Right ventricle myocardium inferior (tissue), 1 donor: ENCODE measurements at regions of chr6 and their contacts with region 1.

Region 1: GRCh38 chr6:117602151-117602898 is at the start of gene GOPC:
- DNase-seq: peak; percentile 98
- ATAC-seq: peak; percentile 100
- total RNA-seq, gene GOPC: 18.1 TPM

Region 2: GRCh38 chr6:117346142-117346930 is 256.0 kb before region 1 on chr6:
- intact Hi-C with region 1: loop called (anchors 2 kb)
- DNase-seq: no peak
- ATAC-seq: no peak

Region 3: GRCh38 chr6:117449549-117450439 is 152.5 kb before region 1 on chr6:
- intact Hi-C with region 1: loop called (anchors 5 kb)
- DNase-seq: no peak
- ATAC-seq: no peak

Region 4: DNA sequence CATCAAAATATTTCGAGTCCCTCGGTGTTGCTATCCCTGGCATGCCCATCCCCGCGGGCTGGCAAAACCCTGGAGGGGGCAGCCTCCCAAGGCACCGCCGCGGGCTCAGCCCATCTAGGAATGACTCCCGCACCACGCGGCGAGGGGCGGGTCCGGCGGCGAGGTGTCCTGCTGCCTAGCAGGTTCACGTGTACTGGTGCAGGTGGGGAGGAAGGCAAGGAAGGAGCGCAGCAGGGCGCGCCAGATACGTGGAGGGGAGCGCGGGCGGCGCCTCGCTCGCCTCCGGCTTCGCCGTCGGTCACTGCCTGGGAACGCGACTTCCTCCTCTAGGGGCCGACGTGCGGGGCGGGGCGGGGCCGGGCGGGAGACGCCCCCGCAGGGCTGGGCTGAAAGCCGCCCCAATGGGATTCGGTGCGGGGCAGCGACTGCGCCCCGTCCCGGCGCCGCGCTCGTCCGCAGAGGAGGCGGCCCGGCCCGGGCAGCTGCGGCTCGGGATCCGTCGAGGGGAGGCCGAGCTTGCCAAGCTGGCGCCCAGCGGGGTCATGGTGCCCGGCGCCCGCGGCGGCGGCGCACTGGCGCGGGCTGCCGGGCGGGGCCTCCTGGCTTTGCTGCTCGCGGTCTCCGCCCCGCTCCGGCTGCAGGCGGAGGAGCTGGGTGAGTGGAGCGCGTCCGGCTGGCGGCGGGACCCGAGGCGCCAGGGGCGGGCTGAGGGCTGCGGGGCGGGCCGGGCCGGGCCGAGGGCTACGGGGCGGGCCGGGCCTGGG is 119.9 kb before region 1 on chr6 and contains the start of gene DCBLD1:
- intact Hi-C with region 1: loop called (anchors 2 kb)
- DNase-seq: peak; percentile 90
- ATAC-seq: peak; percentile 94
- total RNA-seq, gene DCBLD1: 6.1 TPM

Region 5: GRCh38 chr6:117547688-117548621 is 54.4 kb before region 1 on chr6:
- intact Hi-C with region 1: loop called (anchors 5 kb)
- DNase-seq: peak; percentile 77
- ATAC-seq: peak; percentile 90

Region 6: DNA sequence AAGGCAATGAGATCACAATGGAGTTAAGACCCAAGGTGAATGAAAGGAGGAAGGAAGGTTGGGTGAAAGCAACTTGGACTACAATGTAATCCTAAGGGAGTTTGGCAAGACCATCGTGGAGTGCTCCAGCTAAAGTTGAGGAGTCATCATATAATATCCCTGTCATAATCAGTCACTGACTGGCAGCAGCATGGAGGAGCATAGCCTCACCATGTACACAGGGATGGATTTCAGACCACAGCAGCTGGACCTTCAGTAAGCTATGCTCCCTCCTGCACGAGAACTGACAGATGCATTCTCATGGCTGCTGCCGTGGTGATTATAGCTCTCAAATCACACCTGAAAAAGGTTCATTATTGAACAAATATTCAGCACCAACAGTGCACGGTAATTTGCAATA is 43.0 kb before region 1 on chr6:
- intact Hi-C with region 1: no loop called
- DNase-seq: no peak
- ATAC-seq: no peak

Region 7: GRCh38 chr6:117674991-117675657 is 72.8 kb after region 1 on chr6 and contains the start of gene NUS1:
- intact Hi-C with region 1: loop called (anchors 5 kb)
- DNase-seq: peak; percentile 98
- ATAC-seq: peak; percentile 100
- total RNA-seq, gene NUS1: 13.5 TPM

Region 8: DNA sequence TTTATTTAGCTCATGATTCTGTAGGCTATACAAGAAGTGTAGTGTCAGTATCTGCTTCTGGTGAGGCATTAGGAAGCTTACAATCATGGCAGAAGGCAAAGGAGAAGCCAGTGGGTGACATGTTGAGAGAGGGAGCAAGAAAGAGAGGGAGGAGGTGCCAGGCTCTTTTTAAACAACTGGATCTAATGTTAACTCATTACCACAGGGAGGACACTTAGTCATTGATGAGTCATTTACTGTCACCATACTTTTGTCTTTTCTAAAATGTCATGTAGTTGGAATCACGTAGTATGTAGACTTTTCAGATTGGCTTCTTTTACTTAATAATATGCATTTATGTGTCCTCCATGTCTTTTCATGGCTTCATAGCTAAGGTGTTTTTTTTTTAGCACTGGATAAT is 131.0 kb after region 1 on chr6:
- intact Hi-C with region 1: no loop called
- DNase-seq: no peak
- ATAC-seq: no peak